ENCODE measurements at regions of chr9 and their contacts with region 1.

Region 1: GRCh38 chr9:84301851-84302250 is 38.7 kb downstream of the SLC28A3 start:
- DNase-seq: no peak
- H3K4me3 ChIP-seq: no peak overlapping the region
- H3K27ac ChIP-seq: no peak overlapping the region
- H3K4me1 ChIP-seq: peaks cover 0 to 2% of the 10 kb centered on the region in 2 donors
- H3K27me3 ChIP-seq: no peaks in the 10 kb centered on the region
- CTCF ChIP-seq: no peak
- POLR2A ChIP-seq: no peak

Region 2: DNA sequence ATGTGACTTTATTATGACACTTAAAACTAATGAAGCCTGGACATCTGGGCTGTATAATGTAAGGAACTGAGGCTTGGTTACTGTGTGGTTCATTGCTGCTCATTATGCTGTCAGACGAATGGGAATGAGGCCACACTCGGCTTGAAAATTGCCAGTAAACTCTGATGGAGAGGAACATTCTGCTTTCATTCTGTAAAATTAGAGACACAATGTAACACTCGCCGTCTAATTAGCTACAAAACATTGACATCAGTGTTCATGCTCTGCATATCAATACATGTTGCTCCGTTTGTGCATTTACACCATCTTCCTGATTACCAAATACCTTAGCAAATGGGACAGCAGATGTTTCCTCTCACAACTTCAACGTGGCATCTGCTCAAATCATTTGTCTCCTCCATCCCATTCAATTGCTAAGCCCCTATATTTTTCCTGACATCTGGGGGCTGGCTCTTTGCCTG is 94.3 kb before region 1 on chr9:
- intact Hi-C with region 1: no loop called
- DNase-seq: no peak
- H3K4me3 ChIP-seq: no peak overlapping the region
- H3K27ac ChIP-seq: peak overlapping the region in 1 of 2 donors; percentile 19
- H3K4me1 ChIP-seq: no peaks in the 10 kb centered on the region
- H3K27me3 ChIP-seq: no peaks in the 10 kb centered on the region
- CTCF ChIP-seq: no peak
- POLR2A ChIP-seq: no peak

Region 3: GRCh38 chr9:84319632-84320031 is 17.8 kb after region 1 on chr9:
- intact Hi-C with region 1: loop called (anchors 2 kb)
- DNase-seq: no peak
- H3K4me3 ChIP-seq: no peak overlapping the region
- H3K27ac ChIP-seq: no peak overlapping the region
- H3K4me1 ChIP-seq: no peaks in the 10 kb centered on the region
- H3K27me3 ChIP-seq: no peaks in the 10 kb centered on the region
- CTCF ChIP-seq: no peak
- POLR2A ChIP-seq: no peak

Region 4: GRCh38 chr9:85339338-85339737 is 1037.5 kb after region 1 on chr9:
- intact Hi-C with region 1: loop called (anchors 5 kb)
- DNase-seq: no peak
- H3K4me3 ChIP-seq: no peak overlapping the region
- H3K27ac ChIP-seq: no peak overlapping the region
- H3K4me1 ChIP-seq: no peaks in the 10 kb centered on the region
- H3K27me3 ChIP-seq: no peaks in the 10 kb centered on the region
- CTCF ChIP-seq: no peak
- POLR2A ChIP-seq: no peak